ENCODE measurements at regions of chr2 and their contacts with region 1.

Region 1: DNA sequence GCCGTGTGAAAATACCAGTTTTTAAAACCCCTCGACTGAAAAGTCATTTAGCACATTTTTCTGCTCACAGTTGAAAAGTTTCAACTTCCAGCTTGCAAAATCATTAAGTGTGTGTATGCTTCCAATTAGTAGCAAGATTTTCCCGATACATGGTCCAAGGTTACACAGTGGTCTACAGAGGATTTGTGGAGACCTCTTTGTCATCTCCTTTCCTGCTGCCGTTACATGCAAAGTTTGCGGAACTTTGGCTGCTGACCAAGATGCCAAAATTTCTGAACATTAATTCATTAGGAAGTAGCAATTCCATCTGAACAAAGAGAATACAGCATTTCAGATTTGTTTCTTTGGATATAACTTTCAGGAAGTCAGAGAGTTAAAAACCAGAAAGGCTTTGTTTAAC is 474.6 kb downstream of the PLCL1 start:
- DNase-seq: no peak
- H3K4me3 ChIP-seq: no peak overlapping the region
- H3K27me3 ChIP-seq: no peaks in the 10 kb centered on the region
- CTCF ChIP-seq: no peak

Region 2: DNA sequence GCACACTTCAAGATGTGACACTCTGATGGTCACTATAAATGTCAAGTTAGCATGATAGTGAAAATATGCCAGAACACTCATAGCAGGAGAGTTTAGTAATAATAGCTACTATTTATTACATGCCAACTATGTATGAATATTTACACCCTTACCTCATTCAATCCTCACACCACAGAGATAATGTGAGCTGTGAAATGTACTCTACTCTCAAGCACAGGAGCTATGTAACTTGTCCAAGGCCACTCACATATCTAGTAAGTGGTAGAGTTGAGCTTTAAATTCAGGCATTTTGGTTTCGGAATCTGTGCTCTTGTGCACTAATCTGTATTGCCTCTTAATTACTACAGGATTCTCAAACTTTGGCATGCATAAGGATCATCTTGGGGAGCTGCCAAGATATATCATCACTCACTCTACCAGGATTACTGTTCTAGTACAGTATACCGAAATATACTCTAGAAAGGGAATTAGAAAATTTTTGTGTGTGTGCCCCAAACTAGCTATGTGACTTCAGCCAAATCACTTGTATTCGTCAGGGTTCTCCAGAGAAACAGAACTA is 320.4 kb before region 1 on chr2:
- CTCF ChIA-PET with region 1: no interaction called
- POLR2A ChIA-PET with region 1: no interaction called
- DNase-seq: no peak
- H3K4me3 ChIP-seq: no peak overlapping the region
- H3K27me3 ChIP-seq: no peaks in the 10 kb centered on the region
- CTCF ChIP-seq: no peak

Region 3: DNA sequence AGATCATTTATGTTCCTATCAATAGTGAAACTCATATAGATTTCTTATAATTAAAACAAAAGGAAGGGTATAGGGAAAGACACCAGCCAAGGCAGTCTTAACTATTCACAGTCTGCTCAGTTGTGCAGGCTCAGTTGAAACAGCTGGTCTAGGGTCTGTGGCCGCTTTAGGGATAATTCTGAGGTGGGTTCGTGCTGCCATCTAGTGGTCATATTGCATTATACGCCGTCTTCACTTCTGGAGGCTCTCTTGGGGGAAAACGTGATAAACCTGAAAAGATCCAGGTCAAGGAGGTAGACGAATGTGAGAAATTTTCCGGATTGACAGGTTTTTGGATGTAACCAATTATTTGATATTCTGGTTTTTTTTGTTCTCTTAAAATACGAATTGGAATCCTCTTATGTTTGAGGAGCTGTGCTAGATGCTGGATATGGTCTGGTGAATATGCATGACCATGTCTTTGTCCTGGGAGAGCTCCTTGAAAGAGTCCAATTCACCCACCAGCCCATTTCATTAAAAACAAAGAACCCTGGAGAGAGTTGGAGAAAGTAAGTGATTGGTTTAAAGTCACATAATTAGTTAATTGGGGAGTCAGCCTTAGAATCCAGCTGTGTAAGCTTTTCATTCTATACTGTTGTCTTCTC is 17.8 kb after region 1 on chr2:
- CTCF ChIA-PET with region 1: interaction called, 15 read pairs
- POLR2A ChIA-PET with region 1: no interaction called
- DNase-seq: no peak
- H3K4me3 ChIP-seq: no peak overlapping the region
- H3K27me3 ChIP-seq: peaks cover 1% of the 10 kb centered on the region; the same call in 1 of the 2 replicates
- CTCF ChIP-seq: peak; percentile 79

Measured in BJ (cell line).